A673 (cell line): ENCODE measurements at regions of chr3 and their contacts with region 1.

Region 1: GRCh38 chr3:73542136-73542535 is 82.6 kb downstream of the PDZRN3 start:
- DNase-seq: no peak
- H3K4me3 ChIP-seq: no peak overlapping the region
- H3K27ac ChIP-seq: no peak overlapping the region
- H3K4me1 ChIP-seq: no peaks in the 10 kb centered on the region
- H3K27me3 ChIP-seq: no peaks in the 10 kb centered on the region
- CTCF ChIP-seq: no peak

Region 2: GRCh38 chr3:72082186-72082715 is 1459.9 kb before region 1 on chr3:
- CTCF ChIA-PET with region 1: no interaction called
- POLR2A ChIA-PET with region 1: no interaction called
- intact Hi-C with region 1: no loop called
- DNase-seq: no peak
- H3K4me3 ChIP-seq: no peak overlapping the region
- H3K27ac ChIP-seq: no peak overlapping the region
- H3K4me1 ChIP-seq: no peaks in the 10 kb centered on the region
- H3K27me3 ChIP-seq: no peaks in the 10 kb centered on the region
- CTCF ChIP-seq: no peak

Region 3: GRCh38 chr3:73484656-73485248 is 57.4 kb before region 1 on chr3:
- CTCF ChIA-PET with region 1: interaction called, 12 read pairs
- POLR2A ChIA-PET with region 1: no interaction called
- intact Hi-C with region 1: no loop called
- DNase-seq: no peak
- H3K4me3 ChIP-seq: no peak overlapping the region
- H3K27ac ChIP-seq: no peak overlapping the region
- H3K4me1 ChIP-seq: peaks cover 3% of the 10 kb centered on the region
- H3K27me3 ChIP-seq: no peaks in the 10 kb centered on the region
- CTCF ChIP-seq: no peak

Region 4: DNA sequence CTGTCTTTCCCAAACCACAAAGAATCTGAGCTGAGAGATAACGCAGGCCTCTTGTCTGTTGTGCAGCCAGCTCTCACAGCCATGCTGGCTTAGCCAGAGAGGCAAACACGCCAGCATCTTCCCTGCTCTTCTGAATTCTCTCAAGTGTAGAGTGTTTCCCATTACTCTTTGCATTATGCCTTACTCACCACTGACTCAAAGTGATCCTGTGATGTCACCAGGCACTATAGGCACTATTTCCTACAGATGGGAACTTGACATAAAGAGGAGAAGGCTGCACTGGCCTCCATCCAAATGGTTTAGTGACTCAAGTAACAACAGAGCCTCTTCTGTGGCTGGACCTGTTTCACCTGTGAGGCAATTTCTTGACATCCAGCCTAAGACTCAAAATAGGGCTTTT is 38.2 kb after region 1 on chr3:
- CTCF ChIA-PET with region 1: no interaction called
- POLR2A ChIA-PET with region 1: no interaction called
- intact Hi-C with region 1: no loop called
- DNase-seq: no peak
- H3K4me3 ChIP-seq: no peak overlapping the region
- H3K27ac ChIP-seq: no peak overlapping the region
- H3K4me1 ChIP-seq: no peaks in the 10 kb centered on the region
- H3K27me3 ChIP-seq: no peaks in the 10 kb centered on the region
- CTCF ChIP-seq: no peak